Activated CD8-positive, alpha-beta T cell treated with anti-CD3 and anti-CD28 coated beads for 36 hours (primary cell): ENCODE measurements at regions of chr9 and their contacts with region 1.

Region 1: DNA sequence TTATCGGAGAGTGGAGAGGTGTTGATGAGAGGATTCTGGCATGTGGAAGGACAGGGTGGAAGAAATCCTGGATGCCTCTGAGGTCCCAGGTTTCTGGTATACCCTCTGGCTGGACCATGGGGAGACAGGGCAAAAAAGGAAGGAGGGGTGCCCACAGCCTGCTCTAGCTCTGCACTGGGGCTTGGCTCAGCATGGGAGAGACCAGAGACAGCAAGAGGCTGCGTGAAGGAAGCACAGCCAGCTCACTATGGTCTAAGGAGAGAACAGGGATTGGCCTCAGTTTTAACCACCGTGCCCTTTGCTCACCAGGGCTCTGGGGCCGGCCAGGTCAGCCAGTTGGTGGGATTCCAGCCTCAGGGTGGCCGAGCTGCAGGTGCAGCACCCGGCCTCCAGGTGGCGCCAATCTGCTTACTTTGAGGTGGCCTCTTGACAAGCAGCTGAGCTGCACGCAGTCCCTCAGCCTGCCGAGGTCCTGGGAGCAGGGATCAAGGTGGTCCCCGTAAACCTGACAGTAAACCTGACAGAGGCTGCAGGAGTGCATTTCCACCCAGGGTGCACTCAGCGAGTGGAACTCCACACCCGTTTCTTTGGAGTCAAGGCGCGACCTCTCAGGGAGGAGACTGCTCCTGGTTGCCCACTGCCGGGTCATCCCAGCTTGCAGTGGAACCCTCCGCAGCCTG is 25.0 kb upstream of the SPTLC1 start:
- DNase-seq: peak; percentile 84
- ATAC-seq: peak; percentile 79
- H3K4me3 Mint-ChIP-seq: no peak overlapping the region
- H3K27ac Mint-ChIP-seq: no peak overlapping the region
- H3K4me1 Mint-ChIP-seq: peaks cover 7% of the 10 kb centered on the region
- H3K27me3 Mint-ChIP-seq: peaks cover 29% of the 10 kb centered on the region
- CTCF ChIP-seq: peak; percentile 96

Region 2: GRCh38 chr9:91698266-91698665 is 441.9 kb before region 1 on chr9:
- CTCF ChIA-PET with region 1: no interaction called
- POLR2A ChIA-PET with region 1: no interaction called
- intact Hi-C with region 1: no loop called
- DNase-seq: no peak
- ATAC-seq: peak; percentile 34
- H3K4me3 Mint-ChIP-seq: no peak overlapping the region
- H3K27ac Mint-ChIP-seq: no peak overlapping the region
- H3K4me1 Mint-ChIP-seq: peaks cover 5% of the 10 kb centered on the region
- H3K27me3 Mint-ChIP-seq: peaks cover 2% of the 10 kb centered on the region
- CTCF ChIP-seq: no peak

Region 3: GRCh38 chr9:91775011-91775707 is 365.1 kb before region 1 on chr9:
- CTCF ChIA-PET with region 1: no interaction called
- POLR2A ChIA-PET with region 1: no interaction called
- intact Hi-C with region 1: no loop called
- DNase-seq: peak; percentile 79
- ATAC-seq: peak; percentile 73
- H3K4me3 Mint-ChIP-seq: no peak overlapping the region
- H3K27ac Mint-ChIP-seq: no peak overlapping the region
- H3K4me1 Mint-ChIP-seq: no peaks in the 10 kb centered on the region
- H3K27me3 Mint-ChIP-seq: peaks cover 12% of the 10 kb centered on the region
- CTCF ChIP-seq: peak; percentile 87

Region 4: GRCh38 chr9:91992461-91993041 is 147.7 kb before region 1 on chr9:
- CTCF ChIA-PET with region 1: no interaction called
- POLR2A ChIA-PET with region 1: no interaction called
- intact Hi-C with region 1: no loop called
- DNase-seq: no peak
- ATAC-seq: no peak
- H3K4me3 Mint-ChIP-seq: no peak overlapping the region
- H3K27ac Mint-ChIP-seq: no peak overlapping the region
- H3K4me1 Mint-ChIP-seq: no peaks in the 10 kb centered on the region
- H3K27me3 Mint-ChIP-seq: peaks cover 20% of the 10 kb centered on the region
- CTCF ChIP-seq: no peak

Region 5: GRCh38 chr9:92115071-92115858 is 24.9 kb before region 1 on chr9 and contains the start of gene SPTLC1:
- CTCF ChIA-PET with region 1: interaction called, 39 read pairs
- POLR2A ChIA-PET with region 1: no interaction called
- intact Hi-C with region 1: no loop called
- DNase-seq: peak; percentile 96
- ATAC-seq: peak; percentile 100
- H3K4me3 Mint-ChIP-seq: peak within 1 kb of the TSS; percentile 90
- H3K27ac Mint-ChIP-seq: peak within 1 kb of the TSS; percentile 94
- H3K4me1 Mint-ChIP-seq: peaks cover 23% of the 10 kb centered on the region
- H3K27me3 Mint-ChIP-seq: no peaks in the 10 kb centered on the region
- CTCF ChIP-seq: no peak
- total RNA-seq, gene SPTLC1: 39.6 to 39.8 TPM

Region 6: DNA sequence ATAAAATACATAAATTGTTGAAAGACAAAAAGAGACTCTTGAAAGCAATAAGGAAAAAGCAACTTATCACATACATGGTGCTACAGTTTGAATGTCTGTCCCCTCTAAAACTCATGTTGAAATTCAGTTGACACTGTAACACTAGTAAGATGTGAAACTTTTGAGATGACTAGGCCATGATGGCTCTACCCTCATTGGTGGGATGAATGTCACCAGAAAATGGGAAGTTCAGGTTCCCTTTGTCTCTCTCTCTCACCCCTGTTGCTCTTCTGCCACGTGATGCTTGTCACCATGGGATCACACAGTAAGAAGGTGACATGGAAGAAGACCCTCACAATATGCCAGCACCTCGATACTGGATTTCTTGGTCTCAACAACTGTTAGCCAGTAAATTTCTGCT is 25.3 kb after region 1 on chr9:
- CTCF ChIA-PET with region 1: interaction called, 17 read pairs
- POLR2A ChIA-PET with region 1: no interaction called
- intact Hi-C with region 1: no loop called
- DNase-seq: no peak
- ATAC-seq: no peak
- H3K4me3 Mint-ChIP-seq: no peak overlapping the region
- H3K27ac Mint-ChIP-seq: no peak overlapping the region
- H3K4me1 Mint-ChIP-seq: no peaks in the 10 kb centered on the region
- H3K27me3 Mint-ChIP-seq: peaks cover 8% of the 10 kb centered on the region
- CTCF ChIP-seq: no peak

Region 7: DNA sequence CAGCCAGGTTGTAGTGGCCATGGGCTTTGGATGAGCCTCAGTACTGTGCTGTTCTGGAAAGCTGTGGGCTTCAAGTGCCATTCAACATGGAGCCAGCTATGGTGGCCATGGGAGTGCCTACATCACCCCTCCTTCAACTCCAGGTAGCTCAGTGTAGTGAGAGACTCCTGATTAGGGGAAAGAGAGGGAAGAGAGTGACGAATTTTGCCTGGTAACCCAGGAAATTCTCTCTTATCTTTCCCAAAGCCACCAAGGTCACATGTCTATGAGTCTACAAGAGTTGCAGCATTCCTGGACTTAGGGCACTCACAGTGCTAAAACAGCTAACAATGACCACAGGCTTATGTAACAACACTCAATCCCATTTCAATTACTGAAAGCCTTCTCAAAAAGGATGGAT is 56.7 kb after region 1 on chr9:
- CTCF ChIA-PET with region 1: interaction called, 17 read pairs
- POLR2A ChIA-PET with region 1: no interaction called
- intact Hi-C with region 1: no loop called
- DNase-seq: no peak
- ATAC-seq: no peak
- H3K4me3 Mint-ChIP-seq: no peak overlapping the region
- H3K27ac Mint-ChIP-seq: no peak overlapping the region
- H3K4me1 Mint-ChIP-seq: no peaks in the 10 kb centered on the region
- H3K27me3 Mint-ChIP-seq: no peaks in the 10 kb centered on the region
- CTCF ChIP-seq: no peak

Region 8: GRCh38 chr9:92242260-92243136 is 102.3 kb after region 1 on chr9:
- CTCF ChIA-PET with region 1: interaction called, 10 read pairs
- POLR2A ChIA-PET with region 1: no interaction called
- intact Hi-C with region 1: no loop called
- DNase-seq: no peak
- ATAC-seq: no peak
- H3K4me3 Mint-ChIP-seq: no peak overlapping the region
- H3K27ac Mint-ChIP-seq: no peak overlapping the region
- H3K4me1 Mint-ChIP-seq: no peaks in the 10 kb centered on the region
- H3K27me3 Mint-ChIP-seq: no peaks in the 10 kb centered on the region
- CTCF ChIP-seq: no peak

Region 9: GRCh38 chr9:92276331-92277032 is 136.3 kb after region 1 on chr9:
- CTCF ChIA-PET with region 1: interaction called, 13 read pairs
- POLR2A ChIA-PET with region 1: no interaction called
- intact Hi-C with region 1: no loop called
- DNase-seq: no peak
- ATAC-seq: peak; percentile 34
- H3K4me3 Mint-ChIP-seq: no peak overlapping the region
- H3K27ac Mint-ChIP-seq: peak overlapping the region; percentile 66
- H3K4me1 Mint-ChIP-seq: peaks cover 36% of the 10 kb centered on the region
- H3K27me3 Mint-ChIP-seq: no peaks in the 10 kb centered on the region
- CTCF ChIP-seq: no peak

Region 10: GRCh38 chr9:92790542-92791527 is 650.6 kb after region 1 on chr9:
- CTCF ChIA-PET with region 1: interaction called, 15 read pairs
- POLR2A ChIA-PET with region 1: no interaction called
- intact Hi-C with region 1: loop called (anchors 10 kb)
- DNase-seq: peak; percentile 88
- ATAC-seq: peak; percentile 95
- H3K4me3 Mint-ChIP-seq: no peak overlapping the region
- H3K27ac Mint-ChIP-seq: no peak overlapping the region
- H3K4me1 Mint-ChIP-seq: peaks cover 6% of the 10 kb centered on the region
- H3K27me3 Mint-ChIP-seq: peaks cover under 1% of the 10 kb centered on the region
- CTCF ChIP-seq: peak; percentile 91

Region 11: DNA sequence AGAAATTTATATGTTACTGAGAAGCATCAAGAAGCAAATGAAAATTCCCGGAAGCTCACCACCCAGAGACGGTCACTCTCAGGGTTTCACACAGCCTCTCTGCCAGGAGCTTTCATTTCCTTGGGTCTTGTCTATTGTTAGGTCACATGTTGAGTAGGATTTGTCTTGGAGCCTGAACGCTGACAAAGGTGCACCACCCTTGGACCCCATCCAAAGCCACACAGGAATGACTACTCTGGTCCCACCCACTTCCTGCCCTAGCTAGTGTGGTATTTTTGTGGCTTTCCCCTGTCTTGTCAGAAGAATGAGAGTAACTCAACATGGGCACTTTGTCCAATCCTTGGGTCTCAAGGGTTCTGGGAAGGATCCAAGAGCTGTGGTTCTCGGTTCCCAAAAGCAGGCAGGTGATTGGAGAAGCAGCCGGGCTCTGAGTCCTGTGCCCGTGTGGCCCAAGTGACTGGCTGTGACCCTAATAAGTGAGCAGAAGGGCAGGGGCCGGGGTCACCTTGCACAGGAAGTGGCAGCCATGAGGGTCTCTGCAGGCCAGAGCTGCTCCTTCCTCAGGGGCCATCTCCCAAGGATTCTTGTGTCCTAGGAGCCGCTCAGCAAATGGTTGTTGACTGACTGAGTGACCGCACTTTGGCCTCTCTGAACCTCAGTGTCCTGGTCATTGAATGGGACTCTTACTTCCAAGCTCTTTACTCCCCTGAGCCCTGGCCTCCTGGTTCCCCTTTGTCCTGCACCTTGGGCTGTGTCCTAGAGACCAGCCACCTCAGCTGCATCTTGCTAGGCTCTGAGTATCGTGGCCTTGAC is 814.0 kb after region 1 on chr9:
- CTCF ChIA-PET with region 1: no interaction called
- POLR2A ChIA-PET with region 1: no interaction called
- intact Hi-C with region 1: no loop called
- DNase-seq: peak; percentile 93
- ATAC-seq: peak; percentile 90
- H3K4me3 Mint-ChIP-seq: peak overlapping the region; percentile 63
- H3K27ac Mint-ChIP-seq: peak overlapping the region; percentile 97
- H3K4me1 Mint-ChIP-seq: peaks cover 61% of the 10 kb centered on the region
- H3K27me3 Mint-ChIP-seq: no peaks in the 10 kb centered on the region
- CTCF ChIP-seq: no peak